ENCODE measurements at regions of chr22 and their contacts with region 1.

Region 1: GRCh38 chr22:38755911-38756532 is at the start of gene SUN2:
- DNase-seq: peak; percentile 99
- CTCF ChIP-seq: no peak

Region 2: GRCh38 chr22:38744981-38745380 is 11.0 kb before region 1 on chr22:
- CTCF ChIA-PET with region 1: interaction called, 4 read pairs
- POLR2A ChIA-PET with region 1: interaction called, 15 read pairs
- DNase-seq: no peak
- CTCF ChIP-seq: no peak

Region 3: DNA sequence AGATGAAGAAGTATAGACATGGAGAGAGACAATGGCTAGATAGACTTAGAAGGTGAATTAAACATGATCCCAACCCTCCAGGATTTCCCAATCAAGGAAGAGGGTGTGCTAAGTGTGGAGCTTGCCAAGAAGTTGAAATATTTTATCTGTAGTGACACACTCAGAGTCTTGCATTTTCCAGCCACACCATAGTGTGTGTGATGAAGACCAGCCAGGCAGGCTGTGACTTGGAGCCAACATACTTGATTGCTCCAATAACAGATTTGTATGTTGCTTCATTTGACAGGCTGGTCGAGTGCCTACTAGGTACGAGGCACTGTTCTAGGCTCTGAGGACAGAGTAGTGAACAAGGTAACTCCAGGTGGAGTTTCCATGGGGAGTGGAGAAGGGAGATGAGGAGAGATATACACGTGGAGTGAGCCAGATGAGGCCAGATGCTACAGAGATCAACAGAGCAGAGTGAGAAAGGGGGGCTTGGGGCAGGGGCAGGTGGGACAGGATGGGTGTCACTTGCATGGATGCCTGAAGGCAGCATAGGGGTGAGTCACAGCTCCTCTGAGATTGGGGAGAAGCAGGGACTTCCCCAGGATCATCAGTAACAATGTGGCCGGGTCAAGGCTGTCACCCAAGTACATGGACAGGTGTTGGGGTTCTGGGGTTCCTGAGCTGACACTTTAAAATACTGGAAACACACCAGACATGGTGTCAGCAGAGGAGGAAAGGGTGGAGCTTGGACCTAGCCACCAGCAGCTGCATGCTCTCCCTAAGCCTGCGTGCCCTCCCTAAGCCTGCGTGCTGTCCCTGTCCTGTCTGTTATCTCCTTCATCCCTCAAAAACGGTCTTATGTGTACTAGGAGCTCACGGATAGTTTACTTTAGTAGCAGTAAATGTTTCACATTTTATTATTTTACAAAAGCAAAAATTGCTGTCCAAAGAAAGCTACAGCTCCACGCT is 465.2 kb after region 1 on chr22:
- CTCF ChIA-PET with region 1: no interaction called
- POLR2A ChIA-PET with region 1: no interaction called
- DNase-seq: no peak
- CTCF ChIP-seq: no peak